Ascending aorta (tissue), 2 donors: ENCODE measurements at regions of chr22 and their contacts with region 1.

Region 1: DNA sequence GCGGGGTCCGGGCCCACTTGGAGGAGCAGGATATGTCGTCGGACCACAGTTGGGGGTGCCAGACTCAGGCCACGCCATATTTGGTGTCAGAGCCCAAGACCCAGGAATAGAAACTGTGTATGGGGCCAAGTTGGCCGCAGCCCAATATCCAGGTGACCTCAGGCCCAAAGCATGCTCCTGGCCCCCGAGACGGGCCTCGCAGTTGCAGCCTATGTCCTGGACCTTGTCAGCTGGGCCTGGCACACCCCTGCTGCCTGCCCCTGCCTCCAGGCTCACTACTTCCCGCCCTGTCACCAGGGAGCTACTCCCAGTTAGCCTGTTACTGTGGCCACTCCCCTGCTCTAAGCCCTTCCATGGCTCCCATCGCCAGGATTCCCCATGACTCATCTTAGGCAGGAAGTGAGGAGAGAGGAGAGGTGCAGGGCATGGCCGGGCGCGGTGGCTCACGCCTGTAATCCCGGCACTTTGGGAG is 23.1 kb downstream of the A4GALT start:
- DNase-seq: peak; percentile 92 to 97
- H3K4me3 ChIP-seq: no peak overlapping the region
- H3K27ac ChIP-seq: peak overlapping the region; percentile 92 to 93
- H3K4me1 ChIP-seq: peaks cover 17 to 46% of the 10 kb centered on the region in 2 donors
- H3K27me3 ChIP-seq: no peaks in the 10 kb centered on the region
- CTCF ChIP-seq: no peak

Region 2: GRCh38 chr22:42614312-42615091 is 83.1 kb before region 1 on chr22 and contains the start of gene POLDIP3:
- intact Hi-C with region 1: loop called (anchors 2 kb)
- DNase-seq: peak; percentile 90 to 99
- H3K4me3 ChIP-seq: peak within 1 kb of the TSS; percentile 67 to 87
- H3K27ac ChIP-seq: peak within 1 kb of the TSS; percentile 88 to 98
- H3K4me1 ChIP-seq: peaks cover 10 to 48% of the 10 kb centered on the region in 2 donors
- H3K27me3 ChIP-seq: no peaks in the 10 kb centered on the region
- CTCF ChIP-seq: peak in 2 of 3 experiments; percentile 16 to 29
- total RNA-seq, gene POLDIP3: 22.9 TPM

Region 3: DNA sequence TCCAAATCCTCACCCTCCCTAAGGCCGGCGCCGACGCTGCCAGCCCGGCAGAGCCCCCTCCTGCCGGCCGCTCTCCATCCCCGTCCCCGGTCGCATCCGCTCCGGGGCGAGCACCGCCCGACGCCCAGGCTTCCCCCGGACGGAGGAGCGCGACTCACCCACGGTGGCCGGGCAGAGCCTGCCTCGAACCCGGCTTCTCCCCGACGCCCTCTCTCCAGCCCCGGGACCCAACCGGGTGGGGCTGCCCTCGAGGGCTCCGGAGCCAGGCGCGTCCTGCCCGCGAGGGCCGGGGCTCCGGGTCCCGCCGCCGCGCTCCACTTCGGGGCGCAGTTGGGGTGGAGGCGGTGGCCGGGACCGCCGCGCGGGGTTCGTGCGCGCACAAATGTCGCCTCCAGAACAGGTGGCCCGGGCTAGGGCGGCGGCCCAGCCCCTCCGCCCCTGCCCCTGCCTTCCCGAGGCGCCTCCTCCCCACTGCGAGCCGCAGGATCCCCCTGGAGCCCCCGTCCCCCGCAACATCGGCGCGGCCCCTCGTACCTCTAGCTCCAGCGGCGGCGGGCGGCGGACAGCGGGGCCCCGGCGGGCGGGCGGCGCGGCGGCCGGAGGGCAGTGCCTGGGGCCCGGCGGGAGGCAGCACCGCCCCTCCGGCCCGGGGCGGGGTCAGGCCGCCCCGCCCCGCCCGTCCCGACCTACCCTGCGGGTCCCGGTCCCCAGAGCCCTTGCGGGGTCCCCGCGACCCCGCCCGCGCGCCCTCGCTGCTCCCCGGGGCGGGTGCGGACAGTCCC is 22.9 kb after region 1 on chr22 and contains the start of gene A4GALT:
- intact Hi-C with region 1: loop called (anchors 2 kb)
- DNase-seq: no peak
- H3K4me3 ChIP-seq: peak within 1 kb of the TSS; percentile 93
- H3K27ac ChIP-seq: peak within 1 kb of the TSS; percentile 90
- H3K4me1 ChIP-seq: peaks cover 0 to 8% of the 10 kb centered on the region in 2 donors
- H3K27me3 ChIP-seq: no peaks in the 10 kb centered on the region
- CTCF ChIP-seq: no peak
- total RNA-seq, gene A4GALT: 85.1 TPM

Region 4: GRCh38 chr22:42745118-42745517 is 47.5 kb after region 1 on chr22:
- intact Hi-C with region 1: loop called (anchors 2 kb)
- DNase-seq: no peak
- H3K4me3 ChIP-seq: no peak overlapping the region
- H3K27ac ChIP-seq: no peak overlapping the region
- H3K4me1 ChIP-seq: peaks cover 4 to 14% of the 10 kb centered on the region in 2 donors
- H3K27me3 ChIP-seq: no peaks in the 10 kb centered on the region
- CTCF ChIP-seq: no peak